CD4-positive, alpha-beta T cell (primary cell): ENCODE measurements at regions of chr12 and their contacts with region 1.

Region 1: GRCh38 chr12:28145216-28145615 is 45.0 kb upstream of the CCDC91 start:
- DNase-seq: no peak
- ATAC-seq: no peak
- H3K4me3 ChIP-seq: no peak overlapping the region
- H3K4me3 Mint-ChIP-seq: no peak overlapping the region
- H3K27ac ChIP-seq: no peak overlapping the region
- H3K27ac Mint-ChIP-seq: no peak overlapping the region
- H3K4me1 ChIP-seq: no peaks in the 10 kb centered on the region
- H3K4me1 Mint-ChIP-seq: no peaks in the 10 kb centered on the region
- H3K27me3 ChIP-seq: no peaks in the 10 kb centered on the region
- H3K27me3 Mint-ChIP-seq: peaks cover 8% of the 10 kb centered on the region
- CTCF ChIP-seq: no peak

Region 2: DNA sequence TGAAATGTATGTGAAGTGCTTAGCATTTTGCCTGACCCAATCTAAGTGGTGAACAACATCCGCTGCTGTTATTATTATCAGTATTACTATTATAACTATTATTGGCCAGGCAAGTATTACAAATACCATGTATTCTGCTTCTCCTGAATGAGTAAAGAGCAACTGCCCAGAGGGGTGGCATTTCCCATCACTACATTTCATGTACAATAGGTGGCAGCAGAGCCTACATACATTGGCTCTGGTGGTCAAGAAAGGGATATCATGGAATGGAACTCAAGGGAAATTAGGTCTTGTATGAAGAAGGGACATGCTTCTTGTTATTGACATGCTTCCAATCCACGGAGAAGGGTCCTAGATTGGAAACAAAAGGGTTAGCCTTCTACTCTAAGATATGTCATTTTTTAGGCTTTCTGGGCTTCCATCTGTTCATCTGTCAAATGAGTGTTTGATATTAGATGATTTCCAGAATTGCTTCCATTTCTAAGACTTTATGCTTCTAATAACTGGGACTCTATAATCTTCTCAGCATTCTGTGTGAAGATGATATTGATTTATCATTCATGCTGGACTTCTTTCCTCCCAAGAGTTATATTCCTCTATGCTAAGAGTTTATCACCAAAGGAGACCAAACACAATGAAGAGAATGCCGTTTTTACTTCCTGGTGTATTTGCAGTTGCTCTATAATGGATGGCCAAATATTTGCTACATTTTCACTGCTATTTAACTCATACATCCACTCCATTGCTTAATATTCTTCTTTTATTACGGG is 1710.7 kb before region 1 on chr12:
- CTCF ChIA-PET with region 1: no interaction called
- POLR2A ChIA-PET with region 1: no interaction called
- intact Hi-C with region 1: loop called in 1 of 2 experiments (anchors 5 kb)
- DNase-seq: peak in 2 of 14 experiments; percentile 22 to 26
- ATAC-seq: no peak
- H3K4me3 ChIP-seq: no peak overlapping the region
- H3K4me3 Mint-ChIP-seq: no peak overlapping the region
- H3K27ac ChIP-seq: no peak overlapping the region
- H3K27ac Mint-ChIP-seq: no peak overlapping the region
- H3K4me1 ChIP-seq: no peaks in the 10 kb centered on the region
- H3K4me1 Mint-ChIP-seq: peaks cover 4% of the 10 kb centered on the region
- H3K27me3 ChIP-seq: no peaks in the 10 kb centered on the region
- H3K27me3 Mint-ChIP-seq: no peaks in the 10 kb centered on the region
- CTCF ChIP-seq: peak; percentile 35